ENCODE measurements at regions of chr1 and their contacts with region 1.

Region 1: GRCh38 chr1:111270781-111271463 is 19.7 kb upstream of the CHIA start:
- DNase-seq: peak; percentile 45
- ATAC-seq: peak; percentile 14
- H3K4me3 ChIP-seq: peak overlapping the region in 4 of 5 experiments; percentile 18 to 57 (median 34)
- H3K4me3 Mint-ChIP-seq: peak overlapping the region; percentile 81
- H3K27ac ChIP-seq: no peak overlapping the region
- H3K27ac Mint-ChIP-seq: no peak overlapping the region
- H3K4me1 ChIP-seq: peaks cover 21 to 22% of the 10 kb centered on the region in 2 donors
- H3K4me1 Mint-ChIP-seq: peaks cover 21% of the 10 kb centered on the region
- H3K27me3 ChIP-seq: peaks cover 0 to 34% (median 27%) of the 10 kb centered on the region in 4 experiments
- H3K27me3 Mint-ChIP-seq: peaks cover 47% of the 10 kb centered on the region
- CTCF ChIP-seq: no peak

Region 2: DNA sequence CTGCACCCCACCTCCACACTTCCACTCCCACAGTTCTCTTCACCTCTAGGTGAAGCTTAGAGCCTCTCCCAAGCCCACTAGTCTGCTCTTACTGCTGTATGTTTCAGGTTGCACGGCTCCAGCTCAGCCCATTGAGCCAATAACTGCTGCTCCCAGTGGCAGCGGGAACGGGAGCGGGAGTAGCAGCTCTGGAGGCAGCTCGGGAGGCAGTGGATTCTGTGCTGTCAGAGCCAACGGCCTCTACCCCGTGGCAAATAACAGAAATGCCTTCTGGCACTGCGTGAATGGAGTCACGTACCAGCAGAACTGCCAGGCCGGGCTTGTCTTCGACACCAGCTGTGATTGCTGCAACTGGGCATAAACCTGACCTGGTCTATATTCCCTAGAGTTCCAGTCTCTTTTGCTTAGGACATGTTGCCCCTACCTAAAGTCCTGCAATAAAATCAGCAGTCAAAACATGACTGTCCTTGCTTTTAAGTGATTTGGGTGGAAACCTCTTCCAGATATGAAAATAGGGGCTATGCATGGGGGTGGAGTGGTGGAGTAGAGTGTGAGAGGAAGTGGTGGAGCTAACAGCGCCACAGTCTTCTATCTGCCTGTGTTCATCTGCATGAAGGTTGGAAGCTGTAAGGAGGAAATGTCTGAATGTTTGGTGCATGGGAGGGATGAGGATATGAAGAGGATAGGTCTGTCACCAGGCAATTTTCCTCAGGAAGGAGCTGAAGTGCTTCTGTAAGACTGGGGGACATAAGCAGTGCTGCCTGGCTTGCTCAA is 49.4 kb after region 1 on chr1:
- CTCF ChIA-PET with region 1: no interaction called
- POLR2A ChIA-PET with region 1: no interaction called
- intact Hi-C with region 1: loop called (anchors 10 kb)
- DNase-seq: no peak
- ATAC-seq: no peak
- H3K4me3 ChIP-seq: no peak overlapping the region
- H3K4me3 Mint-ChIP-seq: no peak overlapping the region
- H3K27ac ChIP-seq: no peak overlapping the region
- H3K27ac Mint-ChIP-seq: no peak overlapping the region
- H3K4me1 ChIP-seq: peaks cover 0 to 12% of the 10 kb centered on the region in 2 donors
- H3K4me1 Mint-ChIP-seq: peaks cover 3% of the 10 kb centered on the region
- H3K27me3 ChIP-seq: no peaks in the 10 kb centered on the region
- H3K27me3 Mint-ChIP-seq: no peaks in the 10 kb centered on the region
- CTCF ChIP-seq: no peak